Activated CD8-positive, alpha-beta memory T cell treated with anti-CD3 and anti-CD28 coated beads, Interleukin-2, amount 10 ng/mL, durations not matched to agents 7 days and 5 days (primary cell): ENCODE measurements at regions of chr1 and their contacts with region 1.

Region 1: GRCh38 chr1:155167166-155168104 is 5.7 kb downstream of the KRTCAP2 start:
- DNase-seq: peak; percentile 92
- ATAC-seq: peak; percentile 80
- H3K4me3 Mint-ChIP-seq: peak overlapping the region; percentile 44
- H3K27ac Mint-ChIP-seq: peak overlapping the region; percentile 45
- H3K4me1 Mint-ChIP-seq: peaks cover 25% of the 10 kb centered on the region
- H3K27me3 Mint-ChIP-seq: no peaks in the 10 kb centered on the region

Region 2: GRCh38 chr1:154974063-154974807 is 193.2 kb before region 1 on chr1 and contains the start of gene CKS1B:
- CTCF ChIA-PET with region 1: no interaction called
- DNase-seq: peak; percentile 98
- ATAC-seq: peak; percentile 89
- H3K4me3 Mint-ChIP-seq: no peak within 1 kb of the TSS
- H3K27ac Mint-ChIP-seq: no peak within 1 kb of the TSS
- H3K4me1 Mint-ChIP-seq: peaks cover 38% of the 10 kb centered on the region
- H3K27me3 Mint-ChIP-seq: no peaks in the 10 kb centered on the region
- total RNA-seq, gene CKS1B: 149 to 155 TPM

Region 3: DNA sequence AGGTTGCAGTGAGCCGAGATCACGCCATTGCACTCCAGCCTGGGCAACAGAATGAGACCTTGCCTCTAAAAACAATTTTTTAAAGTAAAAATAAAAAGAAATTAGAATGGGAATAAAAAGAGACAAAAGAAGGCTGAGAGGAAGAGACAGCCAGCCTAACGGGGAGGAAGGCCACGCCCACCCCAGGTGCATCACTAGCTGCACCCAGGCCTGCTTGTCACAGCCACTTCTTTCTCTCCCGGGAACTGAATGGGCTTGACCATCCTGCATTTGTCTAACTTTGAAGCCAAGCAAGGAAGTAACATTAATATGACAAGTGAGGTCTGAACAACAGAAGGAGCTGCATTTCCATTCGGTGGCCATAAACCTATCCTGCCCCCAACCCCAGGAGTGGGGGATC is 60.6 kb before region 1 on chr1:
- CTCF ChIA-PET with region 1: interaction called, 10 read pairs
- DNase-seq: no peak
- ATAC-seq: no peak
- H3K4me3 Mint-ChIP-seq: no peak overlapping the region
- H3K27ac Mint-ChIP-seq: no peak overlapping the region
- H3K4me1 Mint-ChIP-seq: no peaks in the 10 kb centered on the region
- H3K27me3 Mint-ChIP-seq: peaks cover 12% of the 10 kb centered on the region

Region 4: GRCh38 chr1:155135415-155136028 is 31.9 kb before region 1 on chr1 and contains the start of gene SLC50A1:
- CTCF ChIA-PET with region 1: interaction called, 26 read pairs
- DNase-seq: peak; percentile 95
- ATAC-seq: peak; percentile 84
- H3K4me3 Mint-ChIP-seq: peak within 1 kb of the TSS; percentile 97
- H3K27ac Mint-ChIP-seq: peak within 1 kb of the TSS; percentile 98
- H3K4me1 Mint-ChIP-seq: peaks cover 37% of the 10 kb centered on the region
- H3K27me3 Mint-ChIP-seq: peaks cover 2% of the 10 kb centered on the region
- total RNA-seq, gene SLC50A1: 39.8 to 41.2 TPM

Region 5: GRCh38 chr1:155145491-155145890 is 21.9 kb before region 1 on chr1:
- CTCF ChIA-PET with region 1: interaction called, 17 read pairs
- DNase-seq: no peak
- ATAC-seq: no peak
- H3K4me3 Mint-ChIP-seq: no peak overlapping the region
- H3K27ac Mint-ChIP-seq: no peak overlapping the region
- H3K4me1 Mint-ChIP-seq: peaks cover 2% of the 10 kb centered on the region
- H3K27me3 Mint-ChIP-seq: peaks cover 35% of the 10 kb centered on the region

Region 6: GRCh38 chr1:155261852-155262673 is 94.6 kb after region 1 on chr1 and contains the start of gene SCAMP3:
- CTCF ChIA-PET with region 1: no interaction called
- DNase-seq: peak; percentile 95
- ATAC-seq: peak; percentile 97
- H3K4me3 Mint-ChIP-seq: peak within 1 kb of the TSS; percentile 95
- H3K27ac Mint-ChIP-seq: peak within 1 kb of the TSS; percentile 86
- H3K4me1 Mint-ChIP-seq: peaks cover 39% of the 10 kb centered on the region
- H3K27me3 Mint-ChIP-seq: no peaks in the 10 kb centered on the region
- total RNA-seq, gene SCAMP3: 82.0 to 108 TPM